ENCODE measurements at regions of chr1 and their contacts with region 1.

Region 1: GRCh38 chr1:153985941-153986761 is at the start of gene RAB13:
- DNase-seq: no peak
- H3K4me3 Mint-ChIP-seq: peak within 1 kb of the TSS; percentile 39
- H3K27ac Mint-ChIP-seq: peak within 1 kb of the TSS; percentile 89
- H3K4me1 Mint-ChIP-seq: peaks cover 31% of the 10 kb centered on the region
- H3K27me3 Mint-ChIP-seq: peaks cover 22% of the 10 kb centered on the region

Region 2: GRCh38 chr1:153775458-153776327 is 210.5 kb before region 1 on chr1:
- CTCF ChIA-PET with region 1: interaction called, 10 read pairs
- DNase-seq: peak; percentile 76
- H3K4me3 Mint-ChIP-seq: peak overlapping the region; percentile 79
- H3K27ac Mint-ChIP-seq: peak overlapping the region; percentile 89
- H3K4me1 Mint-ChIP-seq: peaks cover 36% of the 10 kb centered on the region
- H3K27me3 Mint-ChIP-seq: peaks cover 11% of the 10 kb centered on the region

Region 3: GRCh38 chr1:153796791-153797659 is 189.1 kb before region 1 on chr1:
- CTCF ChIA-PET with region 1: interaction called, 54 read pairs
- DNase-seq: peak; percentile 91
- H3K4me3 Mint-ChIP-seq: no peak overlapping the region
- H3K27ac Mint-ChIP-seq: no peak overlapping the region
- H3K4me1 Mint-ChIP-seq: peaks cover 37% of the 10 kb centered on the region
- H3K27me3 Mint-ChIP-seq: peaks cover 12% of the 10 kb centered on the region

Region 4: DNA sequence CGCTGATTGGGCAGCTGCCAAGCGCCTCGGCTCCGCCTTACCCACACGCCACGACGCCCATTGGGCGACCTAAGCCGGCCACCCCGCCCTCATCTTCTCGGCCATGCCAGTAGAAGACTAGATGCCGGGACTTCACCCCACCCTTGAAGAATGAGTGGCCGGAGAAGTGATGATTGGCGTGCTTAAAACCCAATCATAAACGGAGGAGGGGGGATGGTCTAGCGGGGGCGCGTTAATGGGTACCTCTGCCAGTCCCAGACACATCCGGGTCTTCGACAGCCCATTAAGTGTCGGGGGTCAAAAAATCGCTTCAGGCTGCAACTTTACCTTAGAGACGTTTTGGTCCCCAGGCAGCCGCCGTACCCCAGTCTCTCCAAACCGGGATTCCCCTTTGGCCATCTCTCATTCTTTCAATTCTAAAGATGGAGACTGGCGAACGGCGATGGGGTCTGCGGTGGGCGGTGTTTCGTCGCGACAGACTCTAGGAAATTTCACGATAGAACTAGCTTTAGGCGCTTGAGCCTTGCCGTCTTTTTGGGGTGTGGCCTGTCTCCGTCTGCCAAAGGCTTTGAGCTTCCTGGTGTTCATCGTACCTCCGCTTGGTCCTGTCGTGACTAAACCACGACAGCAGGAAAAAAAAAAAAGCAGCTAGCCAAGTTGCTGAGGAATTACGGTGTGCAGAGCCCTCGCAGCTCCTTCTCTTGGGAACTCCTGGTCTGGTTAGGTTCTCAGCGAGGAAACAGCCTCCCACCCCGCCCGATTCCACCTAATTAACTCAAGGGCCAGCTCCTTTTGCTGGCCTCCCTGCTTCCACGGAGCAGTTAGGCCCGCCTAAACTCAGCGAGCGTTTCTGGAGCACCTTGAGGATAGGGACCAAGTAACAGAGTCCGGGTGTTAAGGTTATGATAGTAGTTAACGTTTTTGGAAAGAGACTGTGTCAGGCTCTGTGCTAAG is 62.9 kb before region 1 on chr1 and contains the start of gene GATAD2B:
- CTCF ChIA-PET with region 1: interaction called, 14 read pairs
- DNase-seq: peak; percentile 99
- H3K4me3 Mint-ChIP-seq: peak within 1 kb of the TSS; percentile 82
- H3K27ac Mint-ChIP-seq: peak within 1 kb of the TSS; percentile 96
- H3K4me1 Mint-ChIP-seq: peaks cover 50% of the 10 kb centered on the region
- H3K27me3 Mint-ChIP-seq: peaks cover 6% of the 10 kb centered on the region

Region 5: GRCh38 chr1:153967082-153968000 is 18.8 kb before region 1 on chr1 and contains the start of gene CREB3L4:
- CTCF ChIA-PET with region 1: interaction called, 28 read pairs
- DNase-seq: peak; percentile 92
- H3K4me3 Mint-ChIP-seq: peak within 1 kb of the TSS; percentile 89
- H3K27ac Mint-ChIP-seq: peak within 1 kb of the TSS; percentile 94
- H3K4me1 Mint-ChIP-seq: peaks cover 68% of the 10 kb centered on the region
- H3K27me3 Mint-ChIP-seq: no peaks in the 10 kb centered on the region

Region 6: GRCh38 chr1:154014154-154014910 is 28.2 kb after region 1 on chr1:
- CTCF ChIA-PET with region 1: no interaction called
- DNase-seq: no peak
- H3K4me3 Mint-ChIP-seq: no peak overlapping the region
- H3K27ac Mint-ChIP-seq: peak overlapping the region; percentile 83
- H3K4me1 Mint-ChIP-seq: no peaks in the 10 kb centered on the region
- H3K27me3 Mint-ChIP-seq: no peaks in the 10 kb centered on the region

Measured in activated naive CD4-positive, alpha-beta T cell treated with anti-CD3 and anti-CD28 coated beads, Interleukin-2, amount 10 ng/mL, durations not matched to agents 7 days and 5 days (primary cell).